Mammary epithelial cell (primary cell): ENCODE measurements at regions of chr3 and their contacts with region 1.

Region 1: GRCh38 chr3:129383292-129383860 is 45.1 kb downstream of the EFCAB12 start:
- DNase-seq: peak; percentile 49
- H3K4me3 ChIP-seq: no peak overlapping the region
- H3K27ac ChIP-seq: no peak overlapping the region
- H3K4me1 ChIP-seq: no peaks in the 10 kb centered on the region
- H3K27me3 ChIP-seq: no peaks in the 10 kb centered on the region
- CTCF ChIP-seq: peak; percentile 69 to 81

Region 2: DNA sequence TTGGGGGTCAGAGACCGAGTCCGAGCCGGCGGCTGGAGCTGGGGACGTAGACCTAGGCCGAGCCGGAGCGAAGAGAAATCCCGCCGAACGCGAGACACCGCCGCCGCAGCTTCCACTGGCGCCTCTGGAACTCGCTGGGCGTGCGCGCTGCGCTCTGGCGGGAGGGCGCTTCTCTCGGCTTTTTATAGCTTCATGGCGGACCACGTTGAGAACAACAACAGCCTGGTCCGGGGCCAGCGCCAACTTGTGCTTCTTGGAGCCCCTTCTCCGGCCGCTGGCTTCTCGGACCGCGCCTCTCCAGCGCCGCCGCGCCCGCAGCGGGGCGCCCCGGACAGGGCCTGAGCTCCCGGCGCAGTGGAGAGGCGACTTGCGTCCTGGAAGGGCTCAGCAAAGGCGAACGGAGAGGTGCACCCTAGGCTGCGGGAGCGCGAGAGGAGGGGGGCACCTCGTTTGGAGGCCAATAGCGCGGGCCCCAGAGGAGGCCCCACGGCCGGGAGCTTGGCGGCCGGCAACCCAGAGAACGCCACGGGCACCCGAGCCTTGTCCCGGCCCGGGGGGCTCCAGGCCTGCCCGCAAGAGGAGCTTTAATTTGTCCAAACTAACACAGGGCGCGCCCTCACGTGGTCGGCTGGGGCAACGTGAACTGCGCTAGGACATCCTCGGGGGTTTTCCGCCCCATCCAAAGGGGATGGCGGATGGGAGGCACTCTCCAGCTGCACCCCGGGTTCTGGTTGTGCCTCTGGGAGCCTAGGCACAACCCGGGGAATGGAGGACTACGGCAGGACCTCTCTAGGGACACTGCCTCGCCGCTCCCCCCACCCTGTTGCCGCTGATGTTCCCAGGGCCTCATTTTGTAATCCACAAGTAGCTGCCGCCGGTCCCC is 67.0 kb before region 1 on chr3:
- CTCF ChIA-PET with region 1: no interaction called
- dilution Hi-C with region 1: loop called (anchors 5 kb)
- in situ Hi-C with region 1: no loop called
- intact Hi-C with region 1: no loop called
- DNase-seq: peak; percentile 80
- H3K4me3 ChIP-seq: peak overlapping the region; percentile 67 to 94 (median 89)
- H3K27ac ChIP-seq: peak overlapping the region; percentile 72
- H3K4me1 ChIP-seq: peaks cover 21% of the 10 kb centered on the region
- H3K27me3 ChIP-seq: no peaks in the 10 kb centered on the region
- CTCF ChIP-seq: peak; percentile 32 to 58

Region 3: GRCh38 chr3:129428376-129429079 is 45.2 kb after region 1 on chr3 and contains the start of gene EFCAB12:
- CTCF ChIA-PET with region 1: no interaction called
- dilution Hi-C with region 1: no loop called
- in situ Hi-C with region 1: no loop called
- intact Hi-C with region 1: no loop called
- DNase-seq: peak; percentile 82
- H3K4me3 ChIP-seq: peak within 1 kb of the TSS; percentile 33 to 57 (median 50)
- H3K27ac ChIP-seq: peak within 1 kb of the TSS; percentile 11
- H3K4me1 ChIP-seq: peaks cover 26% of the 10 kb centered on the region
- H3K27me3 ChIP-seq: no peaks in the 10 kb centered on the region
- CTCF ChIP-seq: no peak
- total RNA-seq, gene EFCAB12: under 0.01 to 0.99 TPM

Region 4: DNA sequence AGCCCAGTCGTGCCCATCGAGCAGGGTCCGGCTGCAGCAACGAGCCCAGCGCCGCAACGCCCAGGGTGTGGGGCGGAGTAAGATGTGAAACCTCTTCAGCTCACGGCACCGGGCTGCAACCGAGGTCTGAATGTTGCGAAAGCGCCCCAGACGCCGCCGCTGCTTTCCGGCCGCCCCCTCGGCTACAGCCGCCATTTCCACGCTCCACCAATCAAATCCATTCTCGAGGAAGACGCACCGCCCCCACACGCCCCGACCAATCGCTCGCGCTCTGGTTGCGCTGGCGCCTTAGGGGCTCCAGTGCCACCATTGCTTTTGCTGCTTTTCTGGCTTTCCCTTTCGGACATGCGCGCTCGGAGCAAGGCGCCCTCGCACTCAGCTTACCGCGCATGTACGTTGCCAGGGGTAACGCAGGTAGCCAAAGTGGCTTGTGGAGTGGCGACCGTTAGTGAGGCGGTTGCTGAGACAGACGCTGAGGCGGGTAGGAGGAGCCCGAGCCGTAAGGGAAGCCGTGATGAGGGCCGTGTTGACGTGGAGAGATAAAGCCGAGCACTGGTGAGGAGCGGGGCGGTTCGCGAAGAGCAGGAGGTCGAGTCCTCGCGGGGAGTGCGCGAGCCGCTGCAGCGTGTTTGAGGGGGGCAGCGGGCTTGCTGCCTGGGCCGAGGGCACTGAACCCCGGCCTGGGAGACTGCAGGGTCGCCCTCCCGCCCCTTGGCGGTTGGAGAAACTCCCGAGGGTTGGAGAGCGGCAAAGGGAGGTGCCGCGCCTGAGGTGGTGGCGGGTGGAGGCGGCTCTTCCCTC is 56.6 kb after region 1 on chr3 and contains the starts of genes IFT122 and MBD4:
- CTCF ChIA-PET with region 1: no interaction called
- dilution Hi-C with region 1: no loop called
- in situ Hi-C with region 1: no loop called
- intact Hi-C with region 1: loop called (anchors 5 kb)
- DNase-seq: peak; percentile 100
- H3K4me3 ChIP-seq: peak within 1 kb of the TSS; percentile 72 to 89 (median 78)
- H3K27ac ChIP-seq: peak within 1 kb of the TSS; percentile 80
- H3K4me1 ChIP-seq: peaks cover 20% of the 10 kb centered on the region
- H3K27me3 ChIP-seq: no peaks in the 10 kb centered on the region
- CTCF ChIP-seq: no peak
- total RNA-seq, gene IFT122: 14.7 to 17.2 TPM
- total RNA-seq, gene MBD4: 35.0 to 35.8 TPM

Region 5: DNA sequence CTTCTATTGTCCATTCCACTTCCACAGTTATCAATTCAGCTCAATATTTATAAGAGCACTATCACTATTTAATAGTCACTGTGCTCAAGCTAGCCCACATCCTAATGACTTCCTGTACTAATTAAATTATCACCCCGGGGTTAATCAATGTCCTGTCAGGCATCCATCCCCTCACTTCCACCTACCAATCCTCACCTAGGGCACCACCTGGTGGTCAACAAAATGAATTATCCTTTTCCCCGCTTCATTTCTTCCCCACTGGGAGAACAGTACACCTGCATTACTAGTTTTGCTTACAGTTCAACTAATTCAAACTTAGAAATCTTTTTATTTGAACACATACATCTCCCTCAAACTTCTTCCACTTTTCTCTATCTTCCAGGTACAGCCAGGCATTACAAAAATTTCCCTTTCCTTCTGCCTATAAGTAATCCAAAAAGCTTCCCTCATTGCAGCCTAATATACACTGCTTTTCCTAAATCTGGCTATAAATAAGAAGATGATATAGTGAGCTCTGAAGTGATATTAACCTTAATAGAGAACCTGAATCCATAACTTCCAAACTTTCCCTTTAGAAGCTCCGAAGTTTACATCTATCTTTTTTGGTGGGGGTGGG is 441.7 kb after region 1 on chr3:
- CTCF ChIA-PET with region 1: no interaction called
- dilution Hi-C with region 1: no loop called
- in situ Hi-C with region 1: no loop called
- intact Hi-C with region 1: loop called (anchors 1 kb)
- DNase-seq: peak; percentile 29
- H3K4me3 ChIP-seq: no peak overlapping the region
- H3K27ac ChIP-seq: no peak overlapping the region
- H3K4me1 ChIP-seq: peaks cover 5% of the 10 kb centered on the region
- H3K27me3 ChIP-seq: no peaks in the 10 kb centered on the region
- CTCF ChIP-seq: peak; percentile 52 to 70

Region 6: DNA sequence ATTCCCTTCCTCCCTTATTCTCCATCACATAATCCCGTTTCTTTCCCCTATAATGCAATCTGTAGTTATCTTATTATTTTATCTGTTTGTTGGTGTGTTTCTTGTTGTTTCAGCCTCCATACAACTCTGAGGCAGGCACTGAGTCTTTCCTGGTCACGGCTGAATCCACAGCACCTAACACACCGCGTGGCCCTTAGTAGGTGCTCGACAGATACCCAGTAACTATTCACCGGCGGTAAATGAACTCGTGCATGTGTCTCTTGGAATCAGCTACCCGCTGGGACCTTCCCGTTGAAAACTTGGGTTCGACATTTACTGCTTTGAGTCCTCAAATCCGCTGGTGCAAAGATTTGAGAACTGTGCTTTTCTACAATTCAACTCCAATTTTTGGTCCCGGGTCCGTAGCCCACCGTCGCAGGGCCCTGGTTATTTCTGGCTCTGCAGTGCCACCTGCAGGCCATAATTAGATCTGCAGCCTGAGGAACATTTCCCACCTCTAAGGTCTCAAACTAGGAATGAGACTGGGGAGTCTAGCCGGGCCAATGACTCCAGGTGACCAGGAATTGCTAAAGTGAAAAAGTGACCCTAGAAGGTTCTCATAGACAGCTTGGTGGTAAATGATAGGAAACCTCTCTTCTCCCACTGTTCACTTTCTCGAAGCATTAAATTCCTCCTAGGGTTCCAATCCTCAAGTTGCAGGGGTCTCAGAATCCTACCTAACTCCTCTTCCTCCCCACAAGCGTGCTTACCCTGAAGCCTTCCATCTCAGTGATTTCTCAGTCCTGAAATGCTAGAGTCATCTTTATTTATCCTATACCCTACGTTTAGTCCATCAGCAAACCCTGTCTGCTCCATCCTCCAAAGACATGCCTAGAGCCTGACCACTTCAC is 551.1 kb after region 1 on chr3:
- CTCF ChIA-PET with region 1: no interaction called
- dilution Hi-C with region 1: no loop called
- in situ Hi-C with region 1: no loop called
- intact Hi-C with region 1: loop called (anchors 1 kb)
- DNase-seq: no peak
- H3K4me3 ChIP-seq: no peak overlapping the region
- H3K27ac ChIP-seq: no peak overlapping the region
- H3K4me1 ChIP-seq: no peaks in the 10 kb centered on the region
- H3K27me3 ChIP-seq: no peaks in the 10 kb centered on the region
- CTCF ChIP-seq: peak; percentile 80 to 90

Region 7: GRCh38 chr3:130093741-130094391 is 710.5 kb after region 1 on chr3:
- CTCF ChIA-PET with region 1: no interaction called
- dilution Hi-C with region 1: no loop called
- in situ Hi-C with region 1: no loop called
- intact Hi-C with region 1: loop called (anchors 10 kb)
- DNase-seq: no peak
- H3K4me3 ChIP-seq: no peak overlapping the region
- H3K27ac ChIP-seq: no peak overlapping the region
- H3K4me1 ChIP-seq: peaks cover 10% of the 10 kb centered on the region
- H3K27me3 ChIP-seq: no peaks in the 10 kb centered on the region
- CTCF ChIP-seq: no peak